CD8-positive, alpha-beta memory T cell (primary cell): ENCODE measurements at regions of chr2 and their contacts with region 1.

Region 1: DNA sequence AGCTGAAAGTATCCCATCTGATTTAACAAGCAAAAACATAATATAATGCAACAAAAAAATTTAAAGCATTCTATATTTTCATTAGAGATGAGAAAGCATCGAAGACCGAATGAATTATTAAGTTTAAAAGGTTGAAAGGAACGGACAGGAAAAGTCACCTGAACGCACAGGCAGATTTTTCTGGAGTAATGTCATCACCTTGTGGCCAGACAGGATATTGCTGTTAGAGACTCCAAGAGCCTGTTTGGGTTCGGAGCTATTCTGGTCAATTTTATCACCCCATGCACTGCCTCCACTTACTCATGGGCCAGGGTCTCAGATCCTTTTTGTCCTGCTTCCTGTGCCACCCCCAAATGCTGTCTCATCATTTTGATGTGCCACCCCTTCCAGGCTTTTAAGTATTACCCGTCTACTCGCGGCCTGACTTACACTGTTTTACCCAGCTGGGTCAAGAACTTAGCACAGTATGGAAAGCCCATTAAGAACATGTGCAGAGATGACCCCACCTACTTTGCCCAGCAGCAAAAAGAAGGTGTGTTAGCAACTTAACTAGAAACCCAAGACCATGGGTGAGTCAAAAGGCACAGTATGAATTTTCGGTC is 27.3 kb downstream of the GKN2 start:
- DNase-seq: peak; percentile 24 to 62 (median 52)
- H3K4me3 ChIP-seq: no peak overlapping the region
- H3K4me3 Mint-ChIP-seq: no peak overlapping the region
- H3K27ac ChIP-seq: no peak overlapping the region
- H3K27ac Mint-ChIP-seq: no peak overlapping the region
- H3K4me1 ChIP-seq: no peaks in the 10 kb centered on the region
- H3K4me1 Mint-ChIP-seq: peaks cover 3 to 7% (median 6%) of the 10 kb centered on the region in 3 donors
- H3K27me3 ChIP-seq: no peaks in the 10 kb centered on the region
- H3K27me3 Mint-ChIP-seq: peaks cover 9 to 19% of the 10 kb centered on the region in 2 donors

Region 2: DNA sequence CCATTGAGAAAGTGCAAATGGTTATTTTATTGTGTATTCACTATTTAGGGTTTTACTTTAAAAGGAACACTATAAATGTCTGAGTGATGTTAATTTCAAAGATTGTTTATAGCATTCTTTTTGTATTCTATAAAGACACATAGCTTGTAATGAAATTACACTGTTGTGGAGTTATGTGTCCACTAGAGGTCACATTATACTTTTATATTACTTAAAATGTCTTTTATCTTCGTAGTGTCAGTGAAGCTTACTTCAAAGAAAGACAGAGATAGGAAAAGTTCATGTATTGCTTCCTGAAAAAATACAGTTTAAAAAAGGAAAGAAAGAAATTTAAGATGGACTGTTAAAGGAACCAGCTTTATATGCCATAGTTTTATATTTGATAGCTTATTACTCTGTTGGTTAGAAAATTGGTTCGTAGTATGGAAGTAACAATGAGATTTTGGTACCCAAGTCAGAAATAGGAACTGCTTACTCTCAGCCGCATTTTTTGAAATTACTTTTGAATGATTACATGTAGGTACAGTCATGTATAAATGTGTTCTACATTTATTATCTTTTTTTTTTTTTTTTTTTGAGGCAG is 437.5 kb before region 1 on chr2:
- CTCF ChIA-PET with region 1: interaction called, 11 read pairs
- POLR2A ChIA-PET with region 1: no interaction called
- DNase-seq: no peak
- H3K4me3 ChIP-seq: no peak overlapping the region
- H3K4me3 Mint-ChIP-seq: no peak overlapping the region
- H3K27ac ChIP-seq: no peak overlapping the region
- H3K27ac Mint-ChIP-seq: no peak overlapping the region
- H3K4me1 ChIP-seq: no peaks in the 10 kb centered on the region
- H3K4me1 Mint-ChIP-seq: peaks cover 2 to 5% (median 4%) of the 10 kb centered on the region in 3 donors
- H3K27me3 ChIP-seq: no peaks in the 10 kb centered on the region
- H3K27me3 Mint-ChIP-seq: no peaks in the 10 kb centered on the region

Region 3: GRCh38 chr2:68715353-68716041 is 209.9 kb before region 1 on chr2:
- CTCF ChIA-PET with region 1: interaction called, 16 read pairs
- POLR2A ChIA-PET with region 1: no interaction called
- DNase-seq: peak in 4 of 5 donors; percentile 38 to 67 (median 49)
- H3K4me3 ChIP-seq: peak overlapping the region; percentile 38
- H3K4me3 Mint-ChIP-seq: peak overlapping the region in 6 of 7 donors; percentile 8 to 75 (median 30)
- H3K27ac ChIP-seq: no peak overlapping the region
- H3K27ac Mint-ChIP-seq: peak overlapping the region in 7 of 8 donors; percentile 56 to 90 (median 79)
- H3K4me1 ChIP-seq: peaks cover 63% of the 10 kb centered on the region
- H3K4me1 Mint-ChIP-seq: peaks cover 63% of the 10 kb centered on the region in 3 donors
- H3K27me3 ChIP-seq: no peaks in the 10 kb centered on the region
- H3K27me3 Mint-ChIP-seq: peaks cover 0 to 3% of the 10 kb centered on the region in 2 donors

Region 4: DNA sequence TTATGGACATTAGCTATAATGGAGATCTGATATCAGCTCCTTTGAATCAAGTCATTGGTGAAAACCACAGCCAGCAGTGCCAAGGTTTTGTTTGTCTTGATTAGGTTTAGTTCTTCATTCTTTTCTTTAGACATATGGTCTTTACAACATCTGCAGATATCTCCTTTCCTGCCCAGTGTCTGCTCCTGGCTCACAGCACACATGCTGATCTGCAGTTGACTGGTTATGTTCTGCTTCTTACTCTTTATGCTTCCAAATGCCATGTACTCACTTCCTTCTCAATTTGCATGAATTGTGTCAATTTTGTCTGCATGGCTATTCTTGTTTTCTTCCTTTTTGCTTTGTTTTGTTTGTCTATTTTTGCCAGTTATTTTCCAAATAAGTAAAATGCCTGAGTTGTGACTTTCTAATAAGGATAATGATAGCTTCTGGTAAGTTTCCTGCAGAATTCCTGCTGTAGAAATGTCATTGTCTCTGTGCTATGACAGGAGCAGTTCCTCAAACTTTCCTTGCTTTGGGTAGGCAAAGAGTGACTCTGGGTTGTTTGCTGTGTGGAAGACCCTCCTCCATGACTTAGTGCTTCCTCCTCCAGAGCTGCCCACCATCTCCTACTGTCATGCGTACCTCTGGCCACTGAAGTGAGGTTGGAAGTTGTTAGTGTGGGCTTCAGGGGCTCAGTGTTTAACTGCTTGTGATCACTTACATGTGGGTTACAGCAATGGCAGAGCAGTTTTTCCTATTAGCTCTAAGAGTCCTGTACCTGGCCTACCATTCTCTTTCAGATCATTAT is 182.6 kb before region 1 on chr2:
- CTCF ChIA-PET with region 1: interaction called, 16 read pairs
- POLR2A ChIA-PET with region 1: no interaction called
- DNase-seq: no peak
- H3K4me3 ChIP-seq: no peak overlapping the region
- H3K4me3 Mint-ChIP-seq: peak overlapping the region; percentile 30 to 81 (median 72)
- H3K27ac ChIP-seq: no peak overlapping the region
- H3K27ac Mint-ChIP-seq: peak overlapping the region; percentile 58 to 89 (median 80)
- H3K4me1 ChIP-seq: peaks cover 98% of the 10 kb centered on the region
- H3K4me1 Mint-ChIP-seq: peaks cover 90 to 97% (median 96%) of the 10 kb centered on the region in 3 donors
- H3K27me3 ChIP-seq: no peaks in the 10 kb centered on the region
- H3K27me3 Mint-ChIP-seq: no peaks in the 10 kb centered on the region

Region 5: GRCh38 chr2:68943581-68944568 is 18.5 kb after region 1 on chr2:
- CTCF ChIA-PET with region 1: interaction called, 14 read pairs
- POLR2A ChIA-PET with region 1: no interaction called
- DNase-seq: peak; percentile 24 to 59 (median 37)
- H3K4me3 ChIP-seq: no peak overlapping the region
- H3K4me3 Mint-ChIP-seq: no peak overlapping the region
- H3K27ac ChIP-seq: no peak overlapping the region
- H3K27ac Mint-ChIP-seq: peak overlapping the region in 1 of 8 donors; percentile 33
- H3K4me1 ChIP-seq: no peaks in the 10 kb centered on the region
- H3K4me1 Mint-ChIP-seq: peaks cover 0 to 4% (median 4%) of the 10 kb centered on the region in 3 donors
- H3K27me3 ChIP-seq: peaks cover 12% of the 10 kb centered on the region
- H3K27me3 Mint-ChIP-seq: peaks cover 33 to 61% of the 10 kb centered on the region in 2 donors

Region 6: DNA sequence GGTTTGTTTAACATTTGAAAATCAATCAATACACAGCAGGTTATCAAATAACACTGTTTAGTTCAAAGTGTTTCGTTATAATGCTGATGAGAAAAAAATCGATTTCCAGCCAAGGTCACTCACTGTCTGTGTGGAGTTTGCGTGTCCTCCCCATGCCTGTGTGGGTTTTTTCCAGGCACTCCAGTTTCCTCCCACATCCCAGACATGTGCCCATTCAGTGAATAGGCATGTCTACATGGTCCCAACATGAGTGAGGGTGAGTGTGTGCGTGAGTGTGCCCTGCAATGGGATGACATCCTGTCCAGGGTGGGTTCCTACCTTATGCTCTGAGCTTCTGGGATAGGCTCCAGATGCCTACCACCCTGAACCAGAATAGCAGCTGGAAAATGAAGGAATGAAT is 36.0 kb after region 1 on chr2:
- CTCF ChIA-PET with region 1: no interaction called
- POLR2A ChIA-PET with region 1: no interaction called
- DNase-seq: no peak
- H3K4me3 ChIP-seq: no peak overlapping the region
- H3K4me3 Mint-ChIP-seq: no peak overlapping the region
- H3K27ac ChIP-seq: no peak overlapping the region
- H3K27ac Mint-ChIP-seq: no peak overlapping the region
- H3K4me1 ChIP-seq: no peaks in the 10 kb centered on the region
- H3K4me1 Mint-ChIP-seq: no peaks in the 10 kb centered on the region
- H3K27me3 ChIP-seq: no peaks in the 10 kb centered on the region
- H3K27me3 Mint-ChIP-seq: peaks cover 7 to 33% of the 10 kb centered on the region in 2 donors

Region 7: GRCh38 chr2:69196327-69197117 is 271.1 kb after region 1 on chr2:
- CTCF ChIA-PET with region 1: no interaction called
- POLR2A ChIA-PET with region 1: no interaction called
- DNase-seq: no peak
- H3K4me3 ChIP-seq: no peak overlapping the region
- H3K4me3 Mint-ChIP-seq: no peak overlapping the region
- H3K27ac ChIP-seq: no peak overlapping the region
- H3K27ac Mint-ChIP-seq: no peak overlapping the region
- H3K4me1 ChIP-seq: no peaks in the 10 kb centered on the region
- H3K4me1 Mint-ChIP-seq: no peaks in the 10 kb centered on the region
- H3K27me3 ChIP-seq: no peaks in the 10 kb centered on the region
- H3K27me3 Mint-ChIP-seq: peaks cover 4 to 16% of the 10 kb centered on the region in 2 donors